Calu3 (cell line): ENCODE measurements at regions of chr2 and their contacts with region 1.

Region 1: DNA sequence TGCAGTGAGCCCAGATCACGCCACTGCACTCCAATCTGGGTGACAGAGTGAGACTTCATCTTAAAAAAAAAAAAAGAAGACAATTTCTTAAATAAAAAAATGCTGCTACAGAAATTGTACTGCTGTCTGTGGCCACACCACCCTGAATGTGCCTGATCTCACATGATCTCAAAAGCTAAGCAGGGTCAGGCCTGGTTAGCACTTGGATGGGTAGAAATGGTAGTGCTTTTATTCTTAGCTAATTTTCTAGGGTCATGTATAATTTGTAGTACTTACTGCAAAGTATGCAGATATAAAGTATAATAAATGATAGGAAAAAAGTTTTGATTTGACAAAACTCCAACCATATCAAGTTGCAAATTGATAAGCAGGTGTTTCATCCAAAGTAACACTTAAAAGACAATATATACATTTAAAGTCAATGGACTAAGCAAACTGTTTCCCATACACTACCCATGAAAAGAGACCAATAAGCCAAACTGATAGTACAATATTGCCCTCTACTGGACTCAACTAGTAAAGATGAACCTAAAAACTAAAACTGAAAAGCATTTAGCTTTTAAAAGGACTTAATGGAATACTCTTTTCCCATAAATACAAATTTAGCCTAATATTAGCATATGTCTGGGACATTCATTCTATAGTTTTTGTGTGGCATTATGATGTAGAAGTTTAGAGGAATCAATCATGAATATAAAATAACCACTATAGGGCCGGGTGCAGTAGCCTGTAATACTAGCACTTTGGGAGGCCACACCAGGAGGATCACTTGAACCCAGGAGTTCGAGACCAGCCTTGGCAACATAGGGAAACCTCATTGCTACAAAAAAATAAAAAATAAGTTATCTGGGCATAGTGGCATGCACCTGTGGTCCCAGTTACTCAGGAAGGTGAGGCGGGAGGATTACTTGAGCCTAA is 18.6 kb upstream of the PEX13 start:
- DNase-seq: no peak
- H3K4me3 Mint-ChIP-seq: no peak overlapping the region
- H3K27ac Mint-ChIP-seq: no peak overlapping the region
- H3K4me1 Mint-ChIP-seq: no peaks in the 10 kb centered on the region
- H3K27me3 Mint-ChIP-seq: no peaks in the 10 kb centered on the region
- CTCF ChIP-seq: peak; percentile 39

Region 2: GRCh38 chr2:60794277-60794863 is 204.5 kb before region 1 on chr2:
- CTCF ChIA-PET with region 1: interaction called, 8 read pairs
- intact Hi-C with region 1: loop called (anchors 1 kb)
- DNase-seq: no peak
- H3K4me3 Mint-ChIP-seq: no peak overlapping the region
- H3K27ac Mint-ChIP-seq: no peak overlapping the region
- H3K4me1 Mint-ChIP-seq: no peaks in the 10 kb centered on the region
- H3K27me3 Mint-ChIP-seq: no peaks in the 10 kb centered on the region
- CTCF ChIP-seq: no peak

Region 3: GRCh38 chr2:61055557-61055956 is 56.7 kb after region 1 on chr2:
- CTCF ChIA-PET with region 1: no interaction called
- intact Hi-C with region 1: no loop called
- DNase-seq: no peak
- H3K4me3 Mint-ChIP-seq: no peak overlapping the region
- H3K27ac Mint-ChIP-seq: no peak overlapping the region
- H3K4me1 Mint-ChIP-seq: no peaks in the 10 kb centered on the region
- H3K27me3 Mint-ChIP-seq: no peaks in the 10 kb centered on the region
- CTCF ChIP-seq: no peak